Colonic mucosa (tissue), 4 donors: ENCODE measurements at regions of chr3 and their contacts with region 1.

Region 1: DNA sequence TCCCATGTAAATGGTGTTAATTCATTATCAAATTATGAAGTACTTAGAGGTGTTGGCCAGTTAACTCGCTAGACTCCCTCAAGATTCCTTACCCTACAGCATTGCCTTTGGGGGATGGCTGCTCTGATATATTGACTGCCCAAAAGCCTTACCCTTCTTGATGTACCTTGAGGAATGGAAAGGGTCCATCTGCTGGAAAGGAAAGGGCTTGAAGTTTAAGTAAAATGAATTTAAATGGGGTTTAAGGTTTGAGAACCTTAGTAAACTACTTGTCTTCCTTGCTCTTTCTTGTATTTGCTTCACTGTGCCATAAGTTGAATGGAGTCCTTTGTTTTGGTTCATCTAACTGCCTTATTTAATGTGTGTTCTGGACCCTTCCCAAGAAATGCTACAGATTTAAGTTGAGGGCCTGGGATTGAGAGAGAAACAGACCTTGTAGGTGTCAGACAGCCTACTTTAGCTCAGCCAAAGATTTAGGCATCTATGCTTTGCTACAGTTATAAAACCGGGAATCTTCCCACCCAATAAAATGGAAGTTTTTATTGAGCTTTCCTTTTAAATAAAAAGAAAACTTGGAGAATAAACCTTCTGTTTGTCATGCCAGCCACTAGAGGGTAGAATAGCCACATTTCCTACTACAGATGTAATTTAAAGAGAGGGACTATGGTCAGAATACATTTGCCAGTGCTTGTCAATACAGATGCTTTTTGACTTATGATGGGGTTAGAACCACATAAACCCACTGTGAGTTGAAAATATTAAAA is 25.3 kb downstream of the CMSS1 start:
- DNase-seq: no peak
- H3K4me3 ChIP-seq: no peak overlapping the region
- H3K27ac ChIP-seq: peak overlapping the region; percentile 52
- H3K4me1 ChIP-seq: no peaks in the 10 kb centered on the region
- H3K27me3 ChIP-seq: no peaks in the 10 kb centered on the region
- CTCF ChIP-seq: peak; percentile 55

Region 2: GRCh38 chr3:99965077-99965476 is 122.1 kb after region 1 on chr3:
- intact Hi-C with region 1: loop called (anchors 10 kb)
- DNase-seq: no peak
- H3K4me3 ChIP-seq: no peak overlapping the region
- H3K27ac ChIP-seq: no peak overlapping the region
- H3K4me1 ChIP-seq: no peaks in the 10 kb centered on the region
- H3K27me3 ChIP-seq: no peaks in the 10 kb centered on the region
- CTCF ChIP-seq: no peak

Region 3: DNA sequence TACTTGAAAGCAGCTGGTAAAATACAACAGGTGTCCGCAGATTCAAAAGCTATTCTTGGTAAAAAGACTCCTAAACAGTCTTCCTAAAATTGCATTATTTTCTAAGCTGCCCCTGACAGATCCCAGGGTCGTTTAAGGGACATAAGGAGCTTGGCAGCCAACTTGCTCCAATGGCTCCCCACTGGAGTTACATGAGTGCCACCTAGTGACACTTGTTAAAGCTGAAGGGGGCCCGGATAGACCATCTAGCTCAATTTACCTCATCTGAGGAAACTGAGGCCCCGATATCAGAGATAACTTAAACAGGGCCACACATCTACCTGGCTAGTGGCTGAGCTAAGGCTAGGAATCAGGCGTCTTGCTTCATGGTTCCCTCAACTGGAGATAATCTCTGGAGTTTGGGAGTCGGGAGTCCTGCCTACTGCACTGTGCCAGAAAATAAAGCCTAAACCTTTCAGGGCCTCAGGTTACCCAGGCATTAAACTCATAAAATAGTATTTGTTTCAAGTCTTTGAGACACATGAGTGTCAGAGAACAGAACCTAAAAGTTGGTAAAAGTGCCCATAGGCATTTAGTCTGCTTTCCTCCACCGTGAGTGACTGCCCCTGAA is 411.3 kb after region 1 on chr3:
- intact Hi-C with region 1: loop called (anchors 2 kb)
- DNase-seq: peak; percentile 55
- H3K4me3 ChIP-seq: no peak overlapping the region
- H3K27ac ChIP-seq: no peak overlapping the region
- H3K4me1 ChIP-seq: no peaks in the 10 kb centered on the region
- H3K27me3 ChIP-seq: no peaks in the 10 kb centered on the region
- CTCF ChIP-seq: peak; percentile 76